WTC11 (cell line): ENCODE measurements at regions of chr7 and their contacts with region 1.

Region 1: GRCh38 chr7:131945313-131945911 is 389.0 kb upstream of the PODXL start:
- DNase-seq: peak; percentile 86
- ATAC-seq: peak; percentile 93
- H3K4me3 Mint-ChIP-seq: no peak overlapping the region; the same call in 1 of the 2 replicates
- H3K27ac Mint-ChIP-seq: no peak overlapping the region
- H3K4me1 Mint-ChIP-seq: peaks cover 6% of the 10 kb centered on the region; the same call in 1 of the 2 replicates
- H3K27me3 Mint-ChIP-seq: peaks cover 32% of the 10 kb centered on the region
- CTCF ChIP-seq: peak; percentile 76

Region 2: DNA sequence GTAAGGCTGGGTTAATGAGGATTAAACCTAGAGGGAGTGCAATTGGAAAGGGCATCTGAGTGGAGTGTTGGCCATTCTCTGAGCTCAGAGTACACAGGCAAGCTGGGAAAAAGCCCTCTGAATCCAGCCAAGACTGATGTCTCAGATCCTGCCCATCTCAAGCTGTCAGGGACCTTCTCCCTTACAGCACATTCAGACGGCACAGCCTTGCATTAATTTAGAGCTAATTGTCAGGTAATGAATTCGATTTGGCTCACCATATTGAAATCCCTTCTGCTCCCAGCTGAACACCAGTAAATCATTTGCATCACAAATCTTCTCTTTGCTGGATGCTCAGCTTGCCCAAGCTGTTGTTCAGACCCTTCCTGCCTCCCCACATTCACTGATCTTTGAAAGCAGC is 10.3 kb after region 1 on chr7:
- CTCF ChIA-PET with region 1: interaction called, 10 read pairs
- POLR2A ChIA-PET with region 1: no interaction called
- DNase-seq: no peak
- ATAC-seq: no peak; the same call in 1 of the 2 replicates
- H3K4me3 Mint-ChIP-seq: no peak overlapping the region
- H3K27ac Mint-ChIP-seq: no peak overlapping the region; the same call in 1 of the 2 replicates
- H3K4me1 Mint-ChIP-seq: peaks cover 20% of the 10 kb centered on the region
- H3K27me3 Mint-ChIP-seq: no peaks in the 10 kb centered on the region; the same call in none of the 2 replicates
- CTCF ChIP-seq: no peak

Region 3: DNA sequence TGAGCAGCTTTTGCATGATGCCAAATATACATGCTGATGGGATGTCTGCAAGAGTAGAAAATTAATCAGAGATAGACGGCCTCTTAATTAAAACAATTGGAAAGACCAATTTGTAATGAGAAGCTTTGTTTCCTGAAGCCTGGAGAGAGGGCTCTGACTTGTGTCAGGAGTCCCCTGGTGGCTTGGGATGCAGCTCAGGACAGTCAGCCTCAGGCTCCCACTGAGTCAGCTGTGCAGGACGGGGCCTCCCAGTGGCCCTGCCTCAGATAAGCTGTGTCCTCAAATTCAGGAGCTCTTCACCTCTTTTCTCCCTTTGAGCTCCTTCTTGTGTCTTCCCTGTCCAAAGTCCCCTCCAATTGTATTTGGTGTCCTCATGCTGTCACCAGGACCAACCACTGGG is 49.9 kb after region 1 on chr7:
- CTCF ChIA-PET with region 1: interaction called, 17 read pairs
- POLR2A ChIA-PET with region 1: no interaction called
- DNase-seq: no peak
- ATAC-seq: peak; percentile 47; the same call in 1 of the 2 replicates
- H3K4me3 Mint-ChIP-seq: no peak overlapping the region
- H3K27ac Mint-ChIP-seq: no peak overlapping the region
- H3K4me1 Mint-ChIP-seq: 0 out of 2 replicates have a peak, but pooled peaks cover 3% of the 10 kb centered on the region
- H3K27me3 Mint-ChIP-seq: no peaks in the 10 kb centered on the region; the same call in 1 of the 2 replicates
- CTCF ChIP-seq: no peak

Region 4: DNA sequence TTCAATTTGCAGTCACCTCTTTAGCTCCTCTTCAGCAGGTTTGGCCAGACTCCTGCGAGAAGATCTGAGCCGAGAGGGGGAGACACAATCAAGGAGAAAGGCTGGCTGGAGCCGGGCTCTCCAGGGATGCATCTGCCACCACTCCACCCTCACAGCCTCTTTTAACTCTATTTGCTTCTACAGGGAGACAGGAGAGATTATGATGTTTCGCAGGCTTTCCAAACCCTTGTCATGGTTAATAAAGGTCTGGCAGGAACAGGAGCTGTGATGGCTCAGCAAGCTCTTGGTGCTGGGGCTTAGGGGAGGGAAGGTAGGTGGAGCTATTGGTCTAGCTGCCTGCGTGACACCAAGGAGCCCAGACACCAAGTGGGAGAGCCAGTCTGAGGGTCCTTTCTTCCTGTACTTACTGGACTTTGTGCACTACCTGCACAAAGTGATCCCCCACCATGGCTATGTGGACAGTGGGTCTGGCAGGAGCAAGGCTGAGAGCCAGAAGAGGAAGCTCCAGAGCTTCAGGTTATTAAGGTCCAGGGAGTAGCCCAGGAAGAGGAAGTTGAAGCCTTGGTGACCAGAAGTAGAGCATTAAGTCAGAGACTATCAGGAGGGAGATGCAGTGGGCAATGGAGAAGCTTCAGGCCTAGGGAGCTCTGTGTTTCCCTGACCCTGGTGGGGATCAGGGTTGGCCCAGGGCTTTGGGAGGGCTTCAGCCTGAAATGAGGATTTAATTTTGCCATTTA is 59.3 kb after region 1 on chr7:
- CTCF ChIA-PET with region 1: interaction called, 10 read pairs
- POLR2A ChIA-PET with region 1: no interaction called
- DNase-seq: no peak
- ATAC-seq: peak; percentile 53
- H3K4me3 Mint-ChIP-seq: no peak overlapping the region
- H3K27ac Mint-ChIP-seq: no peak overlapping the region
- H3K4me1 Mint-ChIP-seq: no peaks in the 10 kb centered on the region
- H3K27me3 Mint-ChIP-seq: peaks cover 3% of the 10 kb centered on the region; the same call in 1 of the 2 replicates
- CTCF ChIP-seq: no peak

Region 5: DNA sequence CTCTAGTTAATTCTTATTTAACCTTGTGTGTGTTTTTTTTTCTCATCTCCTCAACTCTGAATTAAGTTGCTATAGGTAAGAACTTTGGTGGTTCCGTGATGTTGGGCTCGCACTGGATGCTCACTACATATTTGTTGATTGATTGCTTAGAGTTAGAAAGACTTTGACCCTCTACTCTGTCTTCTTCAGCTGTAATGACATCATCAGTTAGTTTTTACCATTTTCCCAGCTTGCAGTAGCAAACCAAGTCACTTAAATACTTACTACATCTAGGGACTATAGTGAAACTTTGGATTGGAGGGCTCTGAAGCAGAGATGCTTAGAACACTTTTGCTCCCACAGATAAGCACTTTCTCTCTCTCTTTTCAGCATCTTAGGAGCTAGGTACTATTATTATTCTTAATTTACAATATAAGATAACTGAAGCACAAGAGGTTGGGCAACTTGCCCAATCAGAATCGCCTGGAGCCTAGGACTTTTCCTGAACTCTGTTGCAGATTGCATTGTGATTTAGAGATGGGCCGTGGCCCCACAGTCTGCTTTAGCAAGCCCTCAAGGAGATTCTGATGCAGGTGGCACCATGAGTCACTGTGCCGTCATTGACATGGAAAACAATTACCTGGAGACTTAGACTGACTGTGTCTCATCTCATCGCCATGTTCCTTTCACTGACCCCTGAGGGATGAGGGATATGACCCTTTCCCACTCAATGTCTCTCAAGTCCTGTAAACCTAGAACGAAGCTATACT is 82.9 kb after region 1 on chr7:
- CTCF ChIA-PET with region 1: no interaction called
- POLR2A ChIA-PET with region 1: no interaction called
- DNase-seq: no peak
- ATAC-seq: no peak
- H3K4me3 Mint-ChIP-seq: no peak overlapping the region
- H3K27ac Mint-ChIP-seq: no peak overlapping the region
- H3K4me1 Mint-ChIP-seq: no peaks in the 10 kb centered on the region
- H3K27me3 Mint-ChIP-seq: no peaks in the 10 kb centered on the region
- CTCF ChIP-seq: no peak

Region 6: GRCh38 chr7:132049462-132050304 is 104.3 kb after region 1 on chr7:
- CTCF ChIA-PET with region 1: interaction called, 16 read pairs
- POLR2A ChIA-PET with region 1: no interaction called
- DNase-seq: peak; percentile 76
- ATAC-seq: peak; percentile 78
- H3K4me3 Mint-ChIP-seq: no peak overlapping the region
- H3K27ac Mint-ChIP-seq: no peak overlapping the region
- H3K4me1 Mint-ChIP-seq: no peaks in the 10 kb centered on the region
- H3K27me3 Mint-ChIP-seq: no peaks in the 10 kb centered on the region
- CTCF ChIP-seq: peak; percentile 51

Region 7: DNA sequence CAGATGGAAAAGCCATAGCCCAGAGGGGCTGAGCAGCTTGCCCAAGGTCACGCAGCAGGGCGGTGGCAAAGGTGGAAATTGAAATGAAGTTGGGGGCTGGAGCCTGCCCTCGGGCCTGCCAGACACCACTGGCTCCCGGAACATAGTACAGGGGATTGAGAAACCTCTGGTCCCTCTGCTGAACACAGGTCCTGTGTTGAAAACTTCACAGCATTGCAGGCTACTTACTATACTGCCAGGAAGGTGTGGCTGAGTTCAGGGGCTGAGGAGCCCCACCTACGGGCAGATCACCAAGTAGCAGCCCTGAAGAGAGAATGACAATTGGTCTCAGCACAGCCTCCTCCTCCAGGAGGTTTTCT is 304.2 kb after region 1 on chr7:
- CTCF ChIA-PET with region 1: interaction called, 64 read pairs
- POLR2A ChIA-PET with region 1: no interaction called
- DNase-seq: peak; percentile 51
- ATAC-seq: peak; percentile 93
- H3K4me3 Mint-ChIP-seq: no peak overlapping the region
- H3K27ac Mint-ChIP-seq: no peak overlapping the region
- H3K4me1 Mint-ChIP-seq: peaks cover 34% of the 10 kb centered on the region
- H3K27me3 Mint-ChIP-seq: peaks cover 2% of the 10 kb centered on the region; the same call in 1 of the 2 replicates
- CTCF ChIP-seq: no peak